Activated CD4-positive, alpha-beta T cell treated with anti-CD3 and anti-CD28 coated beads for 36 hours (primary cell): ENCODE measurements at regions of chr16 and their contacts with region 1.

Region 1: GRCh38 chr16:24539291-24539849 is at the start of gene RBBP6:
- DNase-seq: peak; percentile 97
- ATAC-seq: peak; percentile 86
- H3K4me3 Mint-ChIP-seq: peak within 1 kb of the TSS; percentile 90
- H3K27ac Mint-ChIP-seq: peak within 1 kb of the TSS; percentile 100
- H3K4me1 Mint-ChIP-seq: peaks cover 20% of the 10 kb centered on the region
- H3K27me3 Mint-ChIP-seq: no peaks in the 10 kb centered on the region
- total RNA-seq, gene RBBP6: 70.7 to 71.1 TPM

Region 2: GRCh38 chr16:23678430-23679273 is 860.7 kb before region 1 on chr16 and contains the start of gene PLK1:
- CTCF ChIA-PET with region 1: no interaction called
- POLR2A ChIA-PET with region 1: no interaction called
- intact Hi-C with region 1: loop called in 1 of 2 experiments (anchors 1 kb)
- DNase-seq: peak; percentile 93
- ATAC-seq: peak; percentile 97
- H3K4me3 Mint-ChIP-seq: peak within 1 kb of the TSS; percentile 95
- H3K27ac Mint-ChIP-seq: peak within 1 kb of the TSS; percentile 60
- H3K4me1 Mint-ChIP-seq: peaks cover 16% of the 10 kb centered on the region
- H3K27me3 Mint-ChIP-seq: no peaks in the 10 kb centered on the region
- total RNA-seq, gene PLK1: 91.4 to 120 TPM

Region 3: DNA sequence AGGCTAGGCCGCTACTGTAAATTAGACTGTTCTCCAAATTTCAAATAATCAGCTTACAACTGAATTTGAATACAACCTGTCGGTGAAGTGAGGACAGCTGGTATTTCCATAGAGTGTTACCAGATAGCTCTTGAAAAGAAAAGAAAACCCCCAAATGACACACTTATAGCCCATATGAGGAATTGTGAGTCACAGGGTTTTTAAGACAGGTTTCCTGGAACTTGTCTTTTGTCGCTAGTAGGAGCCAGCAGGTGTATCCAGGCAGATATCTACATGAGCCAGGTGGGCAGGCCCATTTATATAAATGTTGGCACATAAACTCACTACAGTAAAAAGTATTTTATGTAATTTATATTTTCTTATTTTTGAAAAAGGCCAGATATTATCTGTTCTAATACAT is 214.1 kb after region 1 on chr16:
- CTCF ChIA-PET with region 1: no interaction called
- POLR2A ChIA-PET with region 1: no interaction called
- intact Hi-C with region 1: loop called in 1 of 2 experiments (anchors 10 kb)
- DNase-seq: peak; percentile 48
- ATAC-seq: peak; percentile 95
- H3K4me3 Mint-ChIP-seq: peak overlapping the region; percentile 38
- H3K27ac Mint-ChIP-seq: peak overlapping the region; percentile 88
- H3K4me1 Mint-ChIP-seq: peaks cover 64% of the 10 kb centered on the region
- H3K27me3 Mint-ChIP-seq: no peaks in the 10 kb centered on the region

Region 4: DNA sequence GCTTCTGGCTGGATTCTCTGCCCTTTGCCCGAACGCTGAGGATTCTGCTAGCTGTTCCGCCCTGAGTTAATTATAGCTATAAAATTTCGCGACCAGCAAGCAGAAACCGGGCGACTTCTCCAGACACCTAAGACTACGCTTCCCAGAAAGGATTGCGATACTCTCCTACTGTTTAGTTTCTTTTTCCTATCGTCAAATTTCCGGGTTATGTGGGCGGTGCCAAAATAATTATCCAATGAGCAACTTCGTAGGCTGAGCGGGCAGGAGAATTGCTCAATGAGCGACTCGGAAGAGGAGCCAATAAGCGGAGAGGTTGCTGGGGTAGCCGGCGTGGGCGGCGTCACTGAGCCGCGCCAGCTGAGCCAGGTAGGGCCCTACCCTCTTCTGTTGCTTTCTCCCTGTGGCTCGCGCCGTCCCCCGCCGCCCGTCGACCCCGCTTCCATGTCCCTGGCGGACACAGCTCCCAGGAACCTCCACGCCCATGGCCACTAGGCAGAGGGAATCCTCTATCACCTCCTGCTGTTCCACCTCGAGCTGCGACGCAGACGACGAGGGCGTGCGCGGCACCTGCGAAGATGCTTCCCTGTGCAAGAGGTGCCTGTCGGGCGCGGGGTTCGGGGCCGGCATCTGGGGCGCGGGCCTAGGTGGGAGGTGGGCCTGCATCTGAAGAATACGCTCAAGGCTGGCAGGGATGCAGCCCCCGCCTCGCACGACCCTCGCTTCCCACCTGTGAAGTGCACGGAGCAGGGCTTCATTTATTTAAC is 572.2 kb after region 1 on chr16 and contains the start of gene LCMT1:
- CTCF ChIA-PET with region 1: interaction called, 3 read pairs
- POLR2A ChIA-PET with region 1: no interaction called
- intact Hi-C with region 1: loop called (anchors 1 to 5 kb)
- DNase-seq: peak; percentile 96
- ATAC-seq: peak; percentile 79
- H3K4me3 Mint-ChIP-seq: peak within 1 kb of the TSS; percentile 87
- H3K27ac Mint-ChIP-seq: peak within 1 kb of the TSS; percentile 99
- H3K4me1 Mint-ChIP-seq: peaks cover 52% of the 10 kb centered on the region
- H3K27me3 Mint-ChIP-seq: no peaks in the 10 kb centered on the region
- total RNA-seq, gene LCMT1: 33.3 to 36.2 TPM